Activated CD4-positive, alpha-beta memory T cell treated with anti-CD3 and anti-CD28 coated beads for 36 hours (primary cell): ENCODE measurements at regions of chr19 and their contacts with region 1.

Region 1: GRCh38 chr19:46840136-46840942 is 10.3 kb downstream of the AP2S1 start:
- DNase-seq: peak; percentile 65
- H3K4me3 Mint-ChIP-seq: no peak overlapping the region
- H3K27ac Mint-ChIP-seq: peak overlapping the region; percentile 38
- H3K4me1 Mint-ChIP-seq: peaks cover 2% of the 10 kb centered on the region
- H3K27me3 Mint-ChIP-seq: no peaks in the 10 kb centered on the region

Region 2: GRCh38 chr19:46746281-46747013 is 93.9 kb before region 1 on chr19 and contains the start of gene STRN4:
- CTCF ChIA-PET with region 1: interaction called, 18 read pairs
- POLR2A ChIA-PET with region 1: no interaction called
- intact Hi-C with region 1: no loop called
- DNase-seq: peak; percentile 66
- H3K4me3 Mint-ChIP-seq: peak within 1 kb of the TSS; percentile 94
- H3K27ac Mint-ChIP-seq: peak within 1 kb of the TSS; percentile 83
- H3K4me1 Mint-ChIP-seq: peaks cover 49% of the 10 kb centered on the region
- H3K27me3 Mint-ChIP-seq: no peaks in the 10 kb centered on the region
- total RNA-seq, gene STRN4: 52.6 to 59.3 TPM

Region 3: GRCh38 chr19:46759817-46760333 is 80.5 kb before region 1 on chr19:
- CTCF ChIA-PET with region 1: interaction called, 78 read pairs
- POLR2A ChIA-PET with region 1: no interaction called
- intact Hi-C with region 1: loop called (anchors 1 kb)
- DNase-seq: no peak
- H3K4me3 Mint-ChIP-seq: no peak overlapping the region
- H3K27ac Mint-ChIP-seq: no peak overlapping the region
- H3K4me1 Mint-ChIP-seq: no peaks in the 10 kb centered on the region
- H3K27me3 Mint-ChIP-seq: no peaks in the 10 kb centered on the region

Region 4: DNA sequence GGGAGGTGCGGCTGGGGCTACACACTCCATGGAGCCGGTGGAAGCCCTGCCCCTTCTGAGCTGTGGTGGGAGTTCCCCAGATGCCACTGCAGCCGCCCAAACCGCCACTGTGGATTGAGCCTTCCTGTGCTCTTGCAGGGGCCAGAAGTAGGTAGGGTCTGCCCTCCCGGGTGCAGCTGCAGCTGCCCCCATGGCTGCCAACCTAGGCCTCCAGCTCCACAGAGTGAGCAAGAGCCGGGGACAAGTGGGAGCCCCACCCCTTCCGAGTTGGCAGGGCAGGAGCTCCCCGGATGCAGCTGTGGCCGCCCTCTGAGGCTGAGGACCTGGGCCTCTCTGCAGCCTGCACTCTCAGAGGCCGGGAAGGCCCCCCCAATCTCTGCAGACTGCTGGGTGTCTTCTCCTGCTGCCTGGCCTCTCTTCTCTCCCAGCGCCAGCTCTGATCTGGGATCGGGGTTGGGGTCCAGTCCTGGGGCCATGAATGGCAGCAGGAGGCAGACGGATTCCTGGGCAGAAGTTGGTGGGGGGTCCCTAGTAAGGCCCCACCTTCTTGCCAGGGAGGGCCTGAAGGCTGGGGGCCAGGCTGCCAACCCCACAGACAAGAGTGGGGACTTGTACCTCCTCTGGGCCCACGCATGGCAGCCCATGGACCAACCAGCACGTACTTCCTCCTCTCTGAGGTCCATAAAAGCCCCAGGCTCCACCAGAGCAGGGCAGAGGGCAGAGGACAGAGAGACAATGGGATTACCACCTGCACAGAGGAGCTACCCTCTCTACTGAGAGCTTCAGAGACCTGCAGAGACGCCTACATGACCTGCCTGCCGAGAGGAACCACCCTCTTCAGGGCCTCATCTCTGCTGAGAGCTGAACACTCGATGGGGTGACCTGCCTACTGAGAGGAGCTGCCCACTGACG is 18.6 kb before region 1 on chr19:
- CTCF ChIA-PET with region 1: interaction called, 23 read pairs
- POLR2A ChIA-PET with region 1: no interaction called
- intact Hi-C with region 1: no loop called
- DNase-seq: peak; percentile 81
- H3K4me3 Mint-ChIP-seq: peak overlapping the region; percentile 26
- H3K27ac Mint-ChIP-seq: peak overlapping the region; percentile 65
- H3K4me1 Mint-ChIP-seq: peaks cover 33% of the 10 kb centered on the region
- H3K27me3 Mint-ChIP-seq: no peaks in the 10 kb centered on the region

Region 5: DNA sequence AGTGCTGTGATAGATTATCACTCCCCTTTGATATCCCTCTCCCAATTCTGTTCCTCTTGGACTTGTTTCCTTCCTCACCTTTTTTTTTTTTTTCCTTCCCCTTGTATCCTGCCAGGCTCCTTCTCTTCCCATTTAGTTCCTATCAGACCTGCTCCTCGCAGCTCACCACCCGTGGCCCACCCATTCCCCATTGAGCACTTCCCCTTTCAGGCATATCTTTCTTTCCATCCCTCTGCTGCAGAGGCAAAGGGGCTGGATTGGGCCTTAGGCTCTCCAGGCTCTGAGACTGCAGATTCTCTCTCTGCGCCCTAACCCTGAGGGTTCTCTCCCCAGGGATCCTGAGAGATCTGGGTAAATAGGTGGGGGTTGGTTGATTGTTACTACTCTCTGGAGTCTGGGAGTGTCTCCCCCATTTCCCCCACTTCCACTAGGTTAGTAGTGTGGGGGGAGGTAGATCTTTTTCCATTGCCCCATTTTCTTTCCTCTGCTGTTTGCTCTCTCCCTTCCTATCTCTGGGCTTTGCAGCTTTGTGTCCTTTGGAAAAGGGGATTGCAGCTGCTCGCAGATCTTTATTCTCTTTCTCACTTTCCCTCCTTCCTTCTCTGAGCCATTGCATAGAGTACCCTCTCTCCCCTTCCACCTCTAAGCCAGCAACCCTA is 22.8 kb after region 1 on chr19:
- CTCF ChIA-PET with region 1: no interaction called
- POLR2A ChIA-PET with region 1: no interaction called
- intact Hi-C with region 1: no loop called
- DNase-seq: no peak
- H3K4me3 Mint-ChIP-seq: no peak overlapping the region
- H3K27ac Mint-ChIP-seq: no peak overlapping the region
- H3K4me1 Mint-ChIP-seq: peaks cover 24% of the 10 kb centered on the region
- H3K27me3 Mint-ChIP-seq: no peaks in the 10 kb centered on the region

Region 6: DNA sequence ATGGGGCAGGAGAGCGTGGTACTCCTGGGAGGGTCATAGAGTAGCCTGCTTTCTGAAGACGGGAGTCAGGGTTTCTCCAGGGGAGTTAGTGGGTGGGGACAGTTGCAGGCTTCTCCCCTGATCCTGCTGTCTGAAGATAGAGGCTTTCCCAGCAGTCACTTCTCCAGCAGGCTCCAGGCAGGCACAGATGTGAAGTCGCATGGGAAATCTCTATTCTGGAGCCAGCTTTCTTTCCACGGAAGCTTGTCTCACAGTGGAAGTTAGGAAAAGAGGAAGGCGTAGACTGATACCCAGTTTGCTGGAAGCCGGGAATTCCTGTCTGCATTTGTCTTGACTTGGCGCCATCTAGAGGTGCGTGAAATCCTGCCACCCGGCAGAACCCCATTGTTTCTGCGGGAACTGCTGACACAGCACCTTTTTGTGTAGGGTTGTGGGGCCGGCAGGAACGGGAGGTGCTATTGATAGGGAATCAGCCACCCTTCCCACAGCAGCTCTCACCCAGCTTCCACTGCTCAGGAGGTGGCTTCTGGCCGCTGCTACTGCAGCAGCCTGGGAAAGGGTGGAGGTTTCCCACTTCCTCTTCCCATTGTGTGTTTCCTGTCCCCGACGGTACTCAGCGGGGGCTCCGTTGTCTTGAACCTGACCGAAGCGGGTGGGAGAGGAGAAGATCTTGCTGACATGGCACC is 150.8 kb after region 1 on chr19:
- CTCF ChIA-PET with region 1: interaction called, 14 read pairs
- POLR2A ChIA-PET with region 1: no interaction called
- intact Hi-C with region 1: no loop called
- DNase-seq: peak; percentile 76
- H3K4me3 Mint-ChIP-seq: no peak overlapping the region
- H3K27ac Mint-ChIP-seq: peak overlapping the region; percentile 34
- H3K4me1 Mint-ChIP-seq: peaks cover 10% of the 10 kb centered on the region
- H3K27me3 Mint-ChIP-seq: no peaks in the 10 kb centered on the region